Mammary epithelial cell (primary cell): ENCODE measurements at regions of chr6 and their contacts with region 1.

Region 1: DNA sequence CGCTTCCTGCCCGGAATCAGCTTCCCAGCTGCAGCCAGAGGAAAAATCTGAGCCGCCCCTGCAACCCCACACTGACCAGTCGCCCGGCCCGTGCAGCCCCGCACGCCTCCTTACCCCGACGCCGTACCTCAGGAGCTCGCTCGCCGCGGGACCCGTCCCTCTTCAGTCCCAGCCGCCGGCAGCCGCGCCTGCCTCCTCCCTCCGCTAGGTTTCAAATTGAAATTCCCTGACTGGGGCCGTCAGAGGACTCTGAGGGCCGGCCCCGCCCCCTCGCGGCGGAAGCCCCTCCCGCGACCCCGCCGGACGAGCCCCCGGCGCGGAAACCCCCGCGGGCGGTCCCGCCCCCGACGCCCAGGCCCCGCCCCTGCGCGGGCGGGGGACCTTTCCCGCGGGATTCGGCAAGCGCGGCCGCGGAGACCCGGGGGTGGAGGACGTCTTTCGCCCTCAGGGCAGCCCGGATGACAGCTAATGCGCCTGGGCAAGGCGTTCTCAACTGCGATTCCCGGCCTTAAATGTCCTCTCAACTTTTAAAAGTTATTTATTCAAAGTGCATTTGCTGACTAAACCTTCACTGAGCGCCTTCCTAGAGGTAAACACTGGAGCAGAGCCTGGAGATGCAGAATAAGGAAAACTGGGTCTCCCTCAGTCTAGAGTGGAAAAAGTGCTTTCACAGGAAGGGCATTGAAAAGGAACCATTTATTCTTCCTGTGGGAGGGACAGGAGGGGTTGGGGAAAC is at the start of gene EPB41L2:
- DNase-seq: peak; percentile 80
- H3K4me3 ChIP-seq: peak within 1 kb of the TSS; percentile 81 to 90 (median 89)
- H3K27ac ChIP-seq: peak within 1 kb of the TSS; percentile 52
- H3K4me1 ChIP-seq: peaks cover 30% of the 10 kb centered on the region
- H3K27me3 ChIP-seq: no peaks in the 10 kb centered on the region
- CTCF ChIP-seq: peak in 1 of 2 donors; percentile 7
- total RNA-seq, gene EPB41L2: 6.8 to 52.2 TPM

Region 2: DNA sequence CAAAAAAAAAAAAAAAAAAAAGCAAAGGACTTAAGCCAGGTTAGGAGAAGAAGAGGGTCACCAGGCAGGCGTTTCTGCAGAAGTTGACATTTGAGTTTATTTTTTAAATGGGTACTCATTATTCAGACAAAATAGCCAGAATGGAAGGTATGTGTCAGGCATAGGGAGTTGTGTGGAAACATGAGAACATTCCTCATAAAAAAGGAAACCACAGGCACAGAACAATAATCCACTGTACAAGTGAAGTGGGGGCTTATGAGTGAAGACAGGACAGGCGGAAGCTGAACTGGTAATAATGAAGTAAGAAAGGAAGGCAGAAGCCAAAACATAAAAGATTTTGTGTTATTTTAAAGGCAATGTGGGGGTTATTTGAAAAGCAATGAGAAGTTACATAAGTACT is 104.7 kb before region 1 on chr6:
- CTCF ChIA-PET with region 1: no interaction called
- dilution Hi-C with region 1: no loop called
- in situ Hi-C with region 1: no loop called
- intact Hi-C with region 1: no loop called
- DNase-seq: peak; percentile 18
- H3K4me3 ChIP-seq: no peak overlapping the region
- H3K27ac ChIP-seq: no peak overlapping the region
- H3K4me1 ChIP-seq: no peaks in the 10 kb centered on the region
- H3K27me3 ChIP-seq: no peaks in the 10 kb centered on the region
- CTCF ChIP-seq: no peak

Region 3: GRCh38 chr6:131023834-131024504 is 39.2 kb before region 1 on chr6:
- CTCF ChIA-PET with region 1: no interaction called
- dilution Hi-C with region 1: no loop called
- in situ Hi-C with region 1: no loop called
- intact Hi-C with region 1: loop called (anchors 5 kb)
- DNase-seq: peak; percentile 80
- H3K4me3 ChIP-seq: peak overlapping the region in 2 of 3 experiments; percentile 12 to 26
- H3K27ac ChIP-seq: peak overlapping the region; percentile 50
- H3K4me1 ChIP-seq: peaks cover 11% of the 10 kb centered on the region
- H3K27me3 ChIP-seq: no peaks in the 10 kb centered on the region
- CTCF ChIP-seq: no peak

Region 4: GRCh38 chr6:131116749-131117360 is 53.7 kb after region 1 on chr6:
- CTCF ChIA-PET with region 1: no interaction called
- dilution Hi-C with region 1: no loop called
- in situ Hi-C with region 1: no loop called
- intact Hi-C with region 1: loop called (anchors 2 kb)
- DNase-seq: peak; percentile 37
- H3K4me3 ChIP-seq: no peak overlapping the region
- H3K27ac ChIP-seq: no peak overlapping the region
- H3K4me1 ChIP-seq: no peaks in the 10 kb centered on the region
- H3K27me3 ChIP-seq: no peaks in the 10 kb centered on the region
- CTCF ChIP-seq: peak; percentile 42 to 53